T-cell (primary cell): ENCODE measurements at regions of chr15 and their contacts with region 1.

Region 1: DNA sequence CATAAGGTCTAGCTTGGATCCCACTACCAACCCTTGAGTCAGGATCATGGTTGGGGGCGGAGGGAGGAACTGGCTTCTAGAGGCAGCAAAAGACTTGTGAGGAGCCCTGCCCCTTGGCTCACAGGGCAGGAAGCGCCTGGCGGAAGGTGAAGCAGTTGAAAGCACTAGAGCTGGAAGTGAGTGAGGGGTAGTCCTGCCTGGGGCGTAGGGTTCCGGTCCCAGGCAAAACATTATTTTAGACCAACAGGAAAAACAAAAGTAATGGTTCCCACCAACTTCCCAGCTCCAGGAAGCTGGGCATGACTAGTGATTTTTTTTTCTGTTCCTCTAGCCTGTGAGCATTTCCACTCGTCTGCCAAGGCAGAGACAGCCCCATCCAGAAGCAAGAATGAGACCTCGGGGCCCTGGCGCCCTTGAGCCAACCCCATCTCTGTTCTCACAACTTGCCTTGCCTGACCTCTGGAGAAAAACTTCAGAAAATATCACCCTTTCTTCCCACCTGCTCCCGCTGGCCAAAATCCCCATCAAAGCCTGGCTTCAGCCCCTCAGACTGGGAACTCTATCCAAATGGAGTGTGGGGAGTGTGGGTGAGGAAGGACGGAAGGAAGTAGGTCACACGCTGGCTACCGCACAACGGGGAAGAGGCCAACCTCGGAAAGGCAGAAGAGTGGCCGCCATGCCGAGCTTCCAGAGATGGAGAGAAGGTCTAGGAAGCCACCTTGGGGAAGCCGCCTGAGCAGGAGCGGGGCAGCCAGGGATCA is 57.5 kb downstream of the RBPMS2 start:
- DNase-seq: peak in 13 of 35 experiments; percentile 9 to 43 (median 22)
- ATAC-seq: peak; percentile 80 to 90 (median 84)
- H3K4me3 ChIP-seq: no peak overlapping the region
- H3K4me3 Mint-ChIP-seq: peak overlapping the region in 1 of 3 donors; percentile 48
- H3K27ac ChIP-seq: peak overlapping the region; percentile 20
- H3K27ac Mint-ChIP-seq: peak overlapping the region; percentile 74 to 77
- H3K4me1 ChIP-seq: peaks cover 12 to 20% of the 10 kb centered on the region in 2 experiments
- H3K4me1 Mint-ChIP-seq: peaks cover 15 to 19% (median 16%) of the 10 kb centered on the region in 3 donors
- H3K27me3 ChIP-seq: no peaks in the 10 kb centered on the region
- H3K27me3 Mint-ChIP-seq: no peaks in the 10 kb centered on the region

Region 2: DNA sequence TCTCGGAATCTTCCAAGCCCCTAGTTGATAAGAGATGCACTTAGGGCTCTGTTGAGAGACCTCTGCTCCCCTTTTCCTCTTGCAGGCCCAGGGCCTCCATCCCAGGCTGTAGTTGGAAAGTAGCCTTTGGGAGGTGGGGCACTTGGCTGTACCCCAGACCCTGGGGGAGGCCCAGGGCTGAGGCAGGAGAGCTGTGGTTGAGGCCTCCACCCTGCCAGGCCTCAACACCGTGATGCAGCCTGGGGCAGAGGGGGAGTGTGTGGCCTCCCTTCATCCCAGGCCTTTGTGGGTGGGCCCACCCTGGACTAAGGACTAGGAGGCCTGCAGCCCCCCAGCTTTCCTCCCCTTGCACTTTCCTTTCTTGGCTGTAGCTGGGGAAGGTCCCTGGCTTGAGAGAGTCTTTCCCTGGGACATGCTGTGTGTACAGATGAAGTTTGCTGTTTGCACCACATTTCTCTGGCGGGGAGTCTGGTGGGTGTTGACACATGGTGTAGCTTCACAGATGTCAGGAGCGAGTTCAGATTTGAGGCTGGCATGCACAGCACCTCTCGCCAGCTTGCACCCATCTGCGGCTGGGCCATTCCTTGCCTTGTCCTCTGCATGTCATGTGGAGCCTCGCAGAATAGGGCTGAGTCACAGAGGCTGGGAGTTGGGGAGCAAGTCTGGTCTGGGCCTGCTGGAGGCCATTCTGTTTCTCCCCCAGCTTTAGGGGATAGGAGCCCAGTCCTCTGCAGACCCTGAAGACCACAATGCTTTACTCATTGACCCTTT is 137.5 kb after region 1 on chr15:
- CTCF ChIA-PET with region 1: interaction called in 1 of 2 experiments, 4 read pairs
- POLR2A ChIA-PET with region 1: interaction called in 1 of 2 experiments, 16 read pairs
- DNase-seq: no peak
- ATAC-seq: peak in 1 of 4 experiments; percentile 14
- H3K4me3 ChIP-seq: no peak overlapping the region
- H3K4me3 Mint-ChIP-seq: no peak overlapping the region
- H3K27ac ChIP-seq: no peak overlapping the region
- H3K27ac Mint-ChIP-seq: peak overlapping the region; percentile 53 to 75
- H3K4me1 ChIP-seq: peaks cover 0 to 60% of the 10 kb centered on the region in 2 experiments
- H3K4me1 Mint-ChIP-seq: peaks cover 52 to 72% (median 72%) of the 10 kb centered on the region in 3 donors
- H3K27me3 ChIP-seq: no peaks in the 10 kb centered on the region
- H3K27me3 Mint-ChIP-seq: no peaks in the 10 kb centered on the region

Region 3: DNA sequence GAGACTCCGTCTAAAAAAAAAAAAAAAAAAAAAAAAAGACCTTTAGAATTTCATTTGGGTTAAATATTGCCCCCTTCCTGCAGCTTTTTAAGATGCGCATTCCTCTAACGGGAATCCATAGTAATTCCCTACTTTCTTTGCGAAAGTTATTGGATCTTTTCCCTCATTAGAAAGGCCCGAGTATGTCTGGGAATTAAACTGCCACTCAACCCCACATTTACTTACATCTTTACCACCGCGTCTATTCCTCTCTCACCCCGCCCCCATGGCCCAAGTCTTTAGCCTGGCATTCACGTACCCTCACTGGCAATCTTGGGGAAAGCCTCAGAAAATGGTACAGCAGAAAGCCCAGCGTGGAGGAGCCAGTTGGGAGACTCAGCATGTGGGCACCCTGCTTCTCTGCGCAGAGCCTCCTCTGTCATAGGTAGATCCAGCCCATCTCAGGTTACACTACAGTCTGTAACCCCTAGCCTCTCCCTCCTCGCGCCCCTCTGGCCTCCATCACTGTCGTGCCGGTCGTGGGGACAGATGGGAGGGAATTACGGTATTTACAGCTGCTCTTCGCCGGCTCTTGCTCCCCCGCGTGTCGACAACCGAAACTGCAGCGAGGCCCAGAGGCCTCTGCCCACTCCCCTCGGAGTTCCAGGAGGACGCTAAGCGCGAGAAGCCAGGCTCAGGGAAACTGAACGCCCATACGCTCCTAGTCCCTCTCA is 187.4 kb after region 1 on chr15:
- CTCF ChIA-PET with region 1: interaction called, 4 to 10 read pairs
- POLR2A ChIA-PET with region 1: interaction called in 1 of 2 experiments, 7 read pairs
- DNase-seq: peak; percentile 43 to 83 (median 73)
- ATAC-seq: peak; percentile 69 to 80 (median 76)
- H3K4me3 ChIP-seq: peak overlapping the region in 1 of 2 donors; percentile 30
- H3K4me3 Mint-ChIP-seq: peak overlapping the region; percentile 47 to 72 (median 61)
- H3K27ac ChIP-seq: no peak overlapping the region
- H3K27ac Mint-ChIP-seq: peak overlapping the region; percentile 34 to 66
- H3K4me1 ChIP-seq: peaks cover 11 to 35% of the 10 kb centered on the region in 2 experiments
- H3K4me1 Mint-ChIP-seq: peaks cover 37 to 42% (median 42%) of the 10 kb centered on the region in 3 donors
- H3K27me3 ChIP-seq: peaks cover 0 to 8% of the 10 kb centered on the region in 2 experiments
- H3K27me3 Mint-ChIP-seq: no peaks in the 10 kb centered on the region